ENCODE measurements at regions of chr1 and their contacts with region 1.

Region 1: GRCh38 chr1:207828485-207829158 is 76.8 kb downstream of the CD46 start:
- DNase-seq: peak; percentile 81
- ATAC-seq: peak; percentile 37
- H3K4me3 ChIP-seq: no peak overlapping the region
- H3K27ac ChIP-seq: peak overlapping the region; percentile 10
- H3K4me1 ChIP-seq: peaks cover 64% of the 10 kb centered on the region
- H3K27me3 ChIP-seq: no peaks in the 10 kb centered on the region
- CTCF ChIP-seq: peak; percentile 83 to 95 (median 93)
- EP300 ChIP-seq: no peak
- POLR2A ChIP-seq: no peak
- RAD21 ChIP-seq: peak; percentile 96

Region 2: GRCh38 chr1:207766569-207766968 is 62.1 kb before region 1 on chr1:
- CTCF ChIA-PET with region 1: no interaction called
- POLR2A ChIA-PET with region 1: no interaction called
- RAD21 ChIA-PET with region 1: no interaction called
- SMC1A ChIA-PET with region 1: no interaction called
- in situ Hi-C with region 1: no loop called
- intact Hi-C with region 1: no loop called
- DNase-seq: no peak
- ATAC-seq: no peak
- H3K4me3 ChIP-seq: no peak overlapping the region
- H3K27ac ChIP-seq: no peak overlapping the region
- H3K4me1 ChIP-seq: no peaks in the 10 kb centered on the region
- H3K27me3 ChIP-seq: no peaks in the 10 kb centered on the region
- CTCF ChIP-seq: no peak
- EP300 ChIP-seq: no peak
- POLR2A ChIP-seq: no peak
- RAD21 ChIP-seq: no peak

Region 3: GRCh38 chr1:207863893-207864535 is 35.4 kb after region 1 on chr1:
- CTCF ChIA-PET with region 1: interaction called, 821 read pairs
- POLR2A ChIA-PET with region 1: interaction called, 620 read pairs
- RAD21 ChIA-PET with region 1: interaction called, 265 read pairs
- SMC1A ChIA-PET with region 1: interaction called, 444 read pairs
- in situ Hi-C with region 1: loop called (anchors 5 kb)
- intact Hi-C with region 1: loop called (anchors 1 kb)
- DNase-seq: peak; percentile 70
- ATAC-seq: peak; percentile 80
- H3K4me3 ChIP-seq: peak overlapping the region; percentile 17; the same call in 1 of the 2 replicates
- H3K27ac ChIP-seq: peak overlapping the region; percentile 38
- H3K4me1 ChIP-seq: peaks cover 48% of the 10 kb centered on the region
- H3K27me3 ChIP-seq: no peaks in the 10 kb centered on the region
- CTCF ChIP-seq: peak; percentile 13 to 38 (median 30); a peak in 2 of 6 replicates
- EP300 ChIP-seq: 0 out of 4 replicates have a peak, but pooled peaks of 1 of the 2 experiments have one; percentile 19
- POLR2A ChIP-seq: peak; percentile 51
- RAD21 ChIP-seq: 0 out of 2 replicates have a peak, but pooled peaks have one; percentile 21

Region 4: DNA sequence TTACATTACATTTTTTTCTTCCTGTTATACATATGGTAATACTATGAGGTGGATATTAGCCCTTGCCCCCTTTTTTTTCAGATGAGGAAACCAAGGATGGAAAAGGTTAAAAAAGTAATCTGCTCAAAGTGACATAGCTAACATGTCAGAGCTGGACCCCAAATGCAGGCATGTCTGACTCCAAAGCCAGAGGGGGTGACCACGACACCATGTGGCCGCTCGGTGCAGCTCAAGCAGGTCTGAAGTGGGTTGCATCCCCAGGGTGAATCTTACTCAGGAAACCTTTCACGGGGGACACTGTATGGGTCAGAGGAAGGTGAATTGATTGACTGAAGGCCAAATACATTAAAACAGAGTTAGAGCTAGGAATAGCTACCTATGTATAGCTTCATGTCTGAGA is 47.5 kb after region 1 on chr1:
- CTCF ChIA-PET with region 1: interaction called, 821 read pairs
- POLR2A ChIA-PET with region 1: interaction called, 620 read pairs
- RAD21 ChIA-PET with region 1: interaction called, 265 read pairs
- SMC1A ChIA-PET with region 1: interaction called, 444 read pairs
- in situ Hi-C with region 1: no loop called
- intact Hi-C with region 1: no loop called
- DNase-seq: no peak
- ATAC-seq: peak; percentile 45; the same call in 2 of the 3 replicates
- H3K4me3 ChIP-seq: no peak overlapping the region
- H3K27ac ChIP-seq: no peak overlapping the region
- H3K4me1 ChIP-seq: peaks cover 20% of the 10 kb centered on the region
- H3K27me3 ChIP-seq: no peaks in the 10 kb centered on the region
- CTCF ChIP-seq: peak in 2 of 3 experiments; percentile 21 to 38; a peak in 3 of 6 replicates
- EP300 ChIP-seq: no peak
- POLR2A ChIP-seq: no peak
- RAD21 ChIP-seq: peak; percentile 46

Region 5: GRCh38 chr1:207952617-207953542 is 124.3 kb after region 1 on chr1:
- CTCF ChIA-PET with region 1: interaction called, 11 read pairs
- POLR2A ChIA-PET with region 1: no interaction called
- RAD21 ChIA-PET with region 1: interaction called, 3 read pairs
- SMC1A ChIA-PET with region 1: interaction called, 3 read pairs
- in situ Hi-C with region 1: no loop called
- intact Hi-C with region 1: no loop called
- DNase-seq: no peak
- ATAC-seq: peak; percentile 53
- H3K4me3 ChIP-seq: no peak overlapping the region
- H3K27ac ChIP-seq: no peak overlapping the region
- H3K4me1 ChIP-seq: no peaks in the 10 kb centered on the region
- H3K27me3 ChIP-seq: peaks cover 5 to 9% of the 10 kb centered on the region in 2 experiments
- CTCF ChIP-seq: no peak
- EP300 ChIP-seq: no peak
- POLR2A ChIP-seq: no peak
- RAD21 ChIP-seq: no peak

Region 6: GRCh38 chr1:209601809-209602657 is 1773.4 kb after region 1 on chr1:
- CTCF ChIA-PET with region 1: no interaction called
- POLR2A ChIA-PET with region 1: no interaction called
- RAD21 ChIA-PET with region 1: no interaction called
- SMC1A ChIA-PET with region 1: no interaction called
- in situ Hi-C with region 1: no loop called
- intact Hi-C with region 1: no loop called
- DNase-seq: no peak
- ATAC-seq: peak; percentile 95
- H3K4me3 ChIP-seq: no peak overlapping the region
- H3K27ac ChIP-seq: no peak overlapping the region
- H3K4me1 ChIP-seq: peaks cover under 1% of the 10 kb centered on the region; the same call in 1 of the 2 replicates
- H3K27me3 ChIP-seq: no peaks in the 10 kb centered on the region
- CTCF ChIP-seq: peak; percentile 64 to 82 (median 70); a peak in 5 of 6 replicates
- EP300 ChIP-seq: no peak
- POLR2A ChIP-seq: no peak
- RAD21 ChIP-seq: peak; percentile 67

Measured in GM12878 (cell line).